Dorsolateral prefrontal cortex (tissue), 120 donors: ENCODE measurements at regions of chr10 and their contacts with region 1.

Region 1: GRCh38 chr10:75001715-75002350 is 109.6 kb upstream of the SAMD8 start:
- DNase-seq: no peak
- H3K4me3 ChIP-seq: no peak overlapping the region
- H3K27ac ChIP-seq: peak overlapping the region in 2 of 59 donors; percentile 7 to 43
- H3K27me3 ChIP-seq: no peaks in the 10 kb centered on the region
- CTCF ChIP-seq: no peak

Region 2: GRCh38 chr10:74507951-74508350 is 493.9 kb before region 1 on chr10:
- intact Hi-C with region 1: no loop called
- DNase-seq: no peak
- H3K4me3 ChIP-seq: no peak overlapping the region
- H3K27ac ChIP-seq: no peak overlapping the region
- H3K27me3 ChIP-seq: no peaks in the 10 kb centered on the region
- CTCF ChIP-seq: no peak

Region 3: GRCh38 chr10:74612195-74612594 is 389.6 kb before region 1 on chr10:
- intact Hi-C with region 1: no loop called
- DNase-seq: no peak
- H3K4me3 ChIP-seq: no peak overlapping the region
- H3K27ac ChIP-seq: no peak overlapping the region
- H3K27me3 ChIP-seq: no peaks in the 10 kb centered on the region
- CTCF ChIP-seq: no peak

Region 4: GRCh38 chr10:74917481-74918077 is 84.3 kb before region 1 on chr10:
- intact Hi-C with region 1: no loop called
- DNase-seq: no peak
- H3K4me3 ChIP-seq: no peak overlapping the region
- H3K27ac ChIP-seq: peak overlapping the region in 2 of 59 donors; percentile 2 to 14
- H3K27me3 ChIP-seq: no peaks in the 10 kb centered on the region
- CTCF ChIP-seq: no peak

Region 5: DNA sequence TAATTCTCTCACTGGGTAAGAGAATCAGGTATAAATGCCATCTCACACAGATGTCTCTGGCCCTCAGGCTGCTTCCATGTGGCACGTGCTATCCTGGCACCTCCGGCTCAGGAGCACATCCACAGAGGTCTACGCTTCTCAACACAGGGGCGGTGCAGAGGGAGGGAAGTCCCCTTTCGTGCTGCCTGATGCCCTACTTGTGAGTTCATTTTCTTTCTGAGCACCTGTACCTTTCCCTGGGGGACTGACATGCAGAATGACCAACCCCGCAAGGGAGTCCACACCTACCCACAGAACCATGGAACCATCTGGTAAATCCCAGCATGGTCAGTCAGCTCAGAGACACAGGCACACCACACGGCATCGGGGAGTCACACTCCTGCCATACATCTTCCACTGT is 10.6 kb after region 1 on chr10:
- intact Hi-C with region 1: loop called in 1 of 2 experiments (anchors 1 kb)
- DNase-seq: no peak
- H3K4me3 ChIP-seq: no peak overlapping the region
- H3K27ac ChIP-seq: no peak overlapping the region
- H3K27me3 ChIP-seq: no peaks in the 10 kb centered on the region
- CTCF ChIP-seq: no peak